ENCODE measurements at regions of chr3 and their contacts with region 1.

Region 1: GRCh38 chr3:70999730-71000129 is 583.8 kb downstream of the FOXP1 start:
- DNase-seq: no peak
- H3K4me3 ChIP-seq: no peak overlapping the region
- H3K27ac ChIP-seq: no peak overlapping the region
- H3K27me3 ChIP-seq: no peaks in the 10 kb centered on the region
- CTCF ChIP-seq: no peak

Region 2: DNA sequence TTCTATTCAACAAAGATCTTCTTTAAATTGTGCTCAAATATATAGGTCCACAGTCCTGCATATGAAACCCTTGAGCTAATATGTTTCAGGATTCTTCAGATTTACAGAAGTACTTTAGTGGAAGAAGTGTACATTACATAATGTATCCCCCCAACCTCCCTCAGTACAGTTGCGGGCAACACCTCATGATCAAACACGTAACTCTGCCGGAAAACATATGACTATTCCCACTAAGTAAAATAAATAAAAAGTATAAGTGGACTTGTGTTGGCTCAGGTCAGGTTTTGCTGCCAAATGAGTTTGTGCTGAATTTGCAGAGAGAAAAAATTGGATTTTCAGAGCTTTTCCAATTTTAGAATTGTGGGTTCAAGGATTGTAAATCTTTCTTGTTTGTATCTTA is 419.7 kb before region 1 on chr3:
- intact Hi-C with region 1: no loop called
- DNase-seq: no peak
- H3K4me3 ChIP-seq: no peak overlapping the region
- H3K27ac ChIP-seq: no peak overlapping the region
- H3K27me3 ChIP-seq: peaks cover 0 to 5% (median 0%) of the 10 kb centered on the region in 45 donors
- CTCF ChIP-seq: no peak

Region 3: GRCh38 chr3:70959506-70960286 is 40.0 kb before region 1 on chr3:
- intact Hi-C with region 1: no loop called
- DNase-seq: no peak
- H3K4me3 ChIP-seq: no peak overlapping the region
- H3K27ac ChIP-seq: peak overlapping the region in 3 of 59 donors; percentile 3 to 5 (median 5)
- H3K27me3 ChIP-seq: no peaks in the 10 kb centered on the region
- CTCF ChIP-seq: no peak

Region 4: DNA sequence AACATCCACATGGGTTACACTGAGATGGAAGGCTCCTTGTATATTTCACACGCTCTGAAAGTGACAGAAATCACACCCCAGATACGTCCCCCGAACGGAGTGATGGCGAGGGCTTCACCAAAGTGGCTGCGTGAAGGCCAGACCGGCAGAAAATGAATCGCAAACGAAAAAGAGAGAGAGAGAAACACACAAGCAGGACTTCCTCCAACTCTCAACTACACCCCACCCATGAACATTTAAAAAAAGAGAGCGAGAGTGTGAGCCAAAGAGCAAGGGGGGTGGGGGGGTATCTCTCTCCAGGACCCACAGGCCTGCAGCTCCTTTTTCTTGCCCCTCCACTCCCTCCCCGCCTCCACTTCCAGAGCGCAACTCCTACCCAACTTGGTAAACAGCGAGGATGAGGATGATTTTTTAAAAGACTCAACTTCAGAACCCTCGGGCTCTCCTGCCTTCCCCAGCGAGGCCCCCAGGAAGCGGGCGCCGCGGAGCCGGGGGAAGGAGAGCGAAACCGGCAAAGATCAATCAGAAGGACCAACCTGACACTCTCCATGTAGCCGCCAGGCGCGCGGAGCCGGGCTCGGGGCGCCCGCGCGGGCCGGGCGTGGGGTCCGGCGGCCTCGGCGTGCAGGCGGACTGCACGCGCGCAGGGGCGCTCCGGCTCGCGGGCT is 64.7 kb after region 1 on chr3:
- intact Hi-C with region 1: no loop called
- DNase-seq: peak in 2 of 10 donors; percentile 31 to 65
- H3K4me3 ChIP-seq: peak overlapping the region; percentile 44 to 85 (median 74)
- H3K27ac ChIP-seq: peak overlapping the region; percentile 48 to 96 (median 87)
- H3K27me3 ChIP-seq: no peaks in the 10 kb centered on the region
- CTCF ChIP-seq: peak in 1 of 56 donors; percentile 19

Region 5: DNA sequence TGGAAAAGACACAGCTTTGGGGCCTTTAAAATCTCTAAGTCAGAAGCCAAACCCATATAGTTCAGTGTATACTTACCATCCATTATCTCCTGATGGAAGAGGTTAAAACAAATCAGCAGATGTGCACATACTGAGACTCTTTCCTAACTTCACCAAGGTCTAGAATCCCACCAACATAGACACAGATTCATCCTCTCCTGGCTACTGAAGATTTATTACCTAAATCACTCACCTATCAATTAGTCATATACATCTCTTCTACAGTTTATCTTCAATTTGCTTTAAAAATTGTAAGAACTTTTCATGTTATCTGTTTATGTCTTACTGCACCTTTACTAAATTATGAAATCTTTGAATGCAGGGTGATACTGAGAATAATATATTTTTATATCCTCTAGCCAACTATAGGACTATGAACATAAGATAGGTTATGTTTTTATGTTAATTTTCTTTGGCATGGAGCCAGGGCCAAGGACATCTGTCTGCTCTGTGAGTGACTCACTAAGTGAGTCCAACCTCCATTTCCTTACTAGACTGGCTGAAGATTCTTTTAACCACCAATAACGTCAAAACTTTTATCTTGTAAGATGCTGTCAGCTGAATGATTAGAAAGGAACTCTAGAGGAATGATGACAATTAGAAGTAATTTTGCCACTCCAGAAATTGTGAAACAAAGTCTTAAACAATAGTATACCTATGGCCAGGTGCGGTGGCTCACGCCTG is 186.2 kb after region 1 on chr3:
- intact Hi-C with region 1: no loop called
- DNase-seq: no peak
- H3K4me3 ChIP-seq: no peak overlapping the region
- H3K27ac ChIP-seq: no peak overlapping the region
- H3K27me3 ChIP-seq: no peaks in the 10 kb centered on the region
- CTCF ChIP-seq: no peak

Region 6: DNA sequence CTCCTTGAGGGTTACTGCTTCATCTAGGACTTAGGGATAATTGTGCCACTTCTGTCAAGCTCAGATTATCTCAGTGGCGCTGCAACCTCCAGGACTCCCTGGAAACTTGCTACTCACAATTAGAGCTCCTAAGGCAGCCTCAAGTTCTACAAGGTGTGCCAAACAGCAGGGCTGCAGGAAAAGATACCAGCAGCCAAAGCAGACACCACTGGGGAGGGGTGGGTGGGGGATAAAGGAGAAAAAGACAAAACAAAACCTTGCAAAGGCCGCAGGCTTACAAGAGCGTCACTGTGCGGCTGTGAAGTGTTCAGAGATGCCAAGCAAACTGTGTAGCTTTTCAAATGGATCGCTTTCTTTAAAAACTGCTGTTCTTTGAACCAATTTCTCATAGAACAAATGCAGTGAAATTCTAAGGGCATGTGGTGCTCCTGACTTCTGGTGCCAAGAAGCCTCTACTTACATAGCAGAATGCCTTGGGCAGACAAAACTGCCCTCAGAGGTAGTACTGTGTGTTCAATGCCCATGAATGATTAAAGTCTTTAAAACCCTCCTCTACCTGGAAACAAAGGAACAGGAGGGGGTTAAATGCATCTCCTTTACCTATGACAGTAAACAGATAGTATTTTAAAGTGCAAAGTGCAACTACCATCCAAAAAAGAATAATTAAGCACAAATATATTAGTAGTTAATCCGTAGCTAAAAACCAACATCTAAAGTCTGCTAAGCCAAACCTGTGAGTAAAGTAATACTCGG is 230.4 kb after region 1 on chr3:
- intact Hi-C with region 1: loop called in 1 of 2 experiments (anchors 10 kb)
- DNase-seq: no peak
- H3K4me3 ChIP-seq: peak overlapping the region in 6 of 59 donors; percentile 10 to 39 (median 28)
- H3K27ac ChIP-seq: no peak overlapping the region
- H3K27me3 ChIP-seq: no peaks in the 10 kb centered on the region
- CTCF ChIP-seq: no peak